Activated naive CD4-positive, alpha-beta T cell treated with anti-CD3 and anti-CD28 coated beads, Interleukin-2, amount 10 ng/mL, durations not matched to agents 7 days and 5 days (primary cell): ENCODE measurements at regions of chr17 and their contacts with region 1.

Region 1: GRCh38 chr17:10875979-10876555 is 38.2 kb upstream of the PIRT start:
- DNase-seq: peak; percentile 43
- H3K4me3 Mint-ChIP-seq: no peak overlapping the region
- H3K27ac Mint-ChIP-seq: no peak overlapping the region
- H3K4me1 Mint-ChIP-seq: no peaks in the 10 kb centered on the region
- H3K27me3 Mint-ChIP-seq: peaks cover 10% of the 10 kb centered on the region

Region 2: GRCh38 chr17:10798332-10798749 is 77.7 kb before region 1 on chr17:
- CTCF ChIA-PET with region 1: no interaction called
- DNase-seq: no peak
- H3K4me3 Mint-ChIP-seq: no peak overlapping the region
- H3K27ac Mint-ChIP-seq: no peak overlapping the region
- H3K4me1 Mint-ChIP-seq: no peaks in the 10 kb centered on the region
- H3K27me3 Mint-ChIP-seq: no peaks in the 10 kb centered on the region

Region 3: DNA sequence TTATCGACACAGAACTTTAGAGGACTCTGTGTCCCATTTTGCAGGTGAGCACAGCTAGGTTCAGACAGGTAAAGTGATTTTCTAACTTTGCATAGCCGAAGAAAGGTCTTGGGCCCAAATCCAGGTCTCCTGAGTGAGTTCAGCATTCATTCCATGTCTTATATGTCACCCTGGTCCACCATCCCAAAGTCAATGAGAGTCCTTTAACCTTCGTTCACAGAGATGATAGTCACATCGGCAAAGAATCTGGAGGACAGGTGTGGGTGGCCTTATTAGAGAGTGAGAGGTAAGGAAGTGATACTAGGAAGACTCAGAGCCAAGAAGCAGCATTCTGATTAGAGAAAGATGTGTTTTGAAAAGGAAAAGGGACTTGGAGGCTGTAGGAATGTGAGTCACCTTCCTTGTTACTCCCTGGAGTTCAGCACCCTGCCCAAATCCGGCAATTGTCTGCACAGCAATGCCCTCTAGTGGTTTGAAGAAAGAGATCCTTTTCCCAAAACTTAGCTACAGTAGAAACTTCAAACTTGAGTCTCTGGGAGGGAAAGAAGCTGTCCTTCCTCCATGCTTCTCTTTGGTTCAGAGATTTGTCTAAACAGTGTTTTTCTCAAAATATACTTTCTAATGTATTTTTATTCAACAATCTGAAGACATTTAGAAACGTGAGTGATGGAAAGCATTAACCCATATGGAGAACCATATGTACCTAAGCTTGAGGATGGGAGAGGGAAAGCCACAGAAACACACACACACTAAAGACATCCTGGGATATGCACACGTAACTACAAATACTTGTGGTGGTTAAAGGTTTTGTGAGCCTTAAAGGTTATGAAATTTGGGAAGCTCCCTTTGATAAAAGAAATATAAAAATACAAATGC is 268.5 kb after region 1 on chr17:
- CTCF ChIA-PET with region 1: interaction called, 12 read pairs
- DNase-seq: peak; percentile 23
- H3K4me3 Mint-ChIP-seq: no peak overlapping the region
- H3K27ac Mint-ChIP-seq: no peak overlapping the region
- H3K4me1 Mint-ChIP-seq: no peaks in the 10 kb centered on the region
- H3K27me3 Mint-ChIP-seq: no peaks in the 10 kb centered on the region